ENCODE measurements at regions of chr15 and their contacts with region 1.

Region 1: GRCh38 chr15:40307421-40308211 is at the start of gene PLCB2:
- DNase-seq: peak; percentile 45 to 86 (median 72)
- ATAC-seq: peak; percentile 76
- H3K4me3 ChIP-seq: peak within 1 kb of the TSS; percentile 92 to 97
- H3K4me3 Mint-ChIP-seq: peak within 1 kb of the TSS; percentile 95
- H3K27ac ChIP-seq: peak within 1 kb of the TSS; percentile 76 to 87
- H3K27ac Mint-ChIP-seq: peak within 1 kb of the TSS; percentile 96
- H3K4me1 ChIP-seq: peaks cover 31% of the 10 kb centered on the region
- H3K4me1 Mint-ChIP-seq: peaks cover 46% of the 10 kb centered on the region
- H3K27me3 ChIP-seq: no peaks in the 10 kb centered on the region
- H3K27me3 Mint-ChIP-seq: no peaks in the 10 kb centered on the region
- CTCF ChIP-seq: peak; percentile 57
- total RNA-seq, gene PLCB2: 154 to 167 TPM

Region 2: DNA sequence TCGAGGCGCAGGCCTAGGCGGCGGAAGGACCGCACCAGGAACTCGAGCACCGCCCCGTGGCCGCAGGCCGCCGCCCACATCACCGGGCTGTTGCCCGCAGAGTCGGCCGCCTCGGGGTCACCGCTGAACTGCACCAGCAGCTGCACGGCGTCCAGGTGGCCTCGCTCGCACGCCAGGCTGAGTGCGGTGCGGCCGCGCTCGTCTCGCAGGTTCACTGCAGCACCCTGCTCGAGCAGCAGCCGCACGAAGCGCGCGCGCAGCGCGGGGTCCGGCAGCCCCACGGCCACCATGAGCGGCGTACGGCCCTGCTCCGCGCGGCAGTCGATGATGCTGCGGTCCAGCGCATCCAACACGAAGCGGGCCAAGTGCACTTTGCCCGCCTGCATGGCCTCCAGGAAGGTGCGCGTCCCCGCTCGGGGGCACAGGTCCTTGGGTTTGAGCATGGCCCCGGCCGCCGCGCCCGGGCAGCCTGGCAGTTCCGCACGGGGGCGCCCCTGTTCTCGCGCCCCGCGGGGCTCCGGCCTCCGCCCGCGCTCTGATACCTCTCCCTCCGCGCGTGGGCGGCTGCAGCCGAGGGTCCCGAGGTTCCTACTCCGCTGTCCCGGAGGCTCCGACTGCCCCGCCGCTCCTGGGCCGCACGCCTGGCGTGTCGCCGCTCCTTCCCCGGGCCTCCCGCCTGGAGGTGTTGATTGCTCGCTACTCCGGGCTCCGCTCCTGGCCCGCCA is 25.3 kb before region 1 on chr15:
- CTCF ChIA-PET with region 1: interaction called, 541 read pairs
- POLR2A ChIA-PET with region 1: interaction called, 24 read pairs
- intact Hi-C with region 1: loop called (anchors 1 kb)
- DNase-seq: peak; percentile 26 to 73 (median 49)
- ATAC-seq: peak; percentile 74
- H3K4me3 ChIP-seq: peak overlapping the region; percentile 48 to 69
- H3K4me3 Mint-ChIP-seq: peak overlapping the region; percentile 79
- H3K27ac ChIP-seq: no peak overlapping the region
- H3K27ac Mint-ChIP-seq: no peak overlapping the region
- H3K4me1 ChIP-seq: peaks cover 5% of the 10 kb centered on the region
- H3K4me1 Mint-ChIP-seq: peaks cover 5% of the 10 kb centered on the region
- H3K27me3 ChIP-seq: peaks cover 11 to 14% of the 10 kb centered on the region in 2 experiments
- H3K27me3 Mint-ChIP-seq: peaks cover 18% of the 10 kb centered on the region
- CTCF ChIP-seq: peak; percentile 56